SK-N-SH (cell line): ENCODE measurements at regions of chr20 and their contacts with region 1.

Region 1: DNA sequence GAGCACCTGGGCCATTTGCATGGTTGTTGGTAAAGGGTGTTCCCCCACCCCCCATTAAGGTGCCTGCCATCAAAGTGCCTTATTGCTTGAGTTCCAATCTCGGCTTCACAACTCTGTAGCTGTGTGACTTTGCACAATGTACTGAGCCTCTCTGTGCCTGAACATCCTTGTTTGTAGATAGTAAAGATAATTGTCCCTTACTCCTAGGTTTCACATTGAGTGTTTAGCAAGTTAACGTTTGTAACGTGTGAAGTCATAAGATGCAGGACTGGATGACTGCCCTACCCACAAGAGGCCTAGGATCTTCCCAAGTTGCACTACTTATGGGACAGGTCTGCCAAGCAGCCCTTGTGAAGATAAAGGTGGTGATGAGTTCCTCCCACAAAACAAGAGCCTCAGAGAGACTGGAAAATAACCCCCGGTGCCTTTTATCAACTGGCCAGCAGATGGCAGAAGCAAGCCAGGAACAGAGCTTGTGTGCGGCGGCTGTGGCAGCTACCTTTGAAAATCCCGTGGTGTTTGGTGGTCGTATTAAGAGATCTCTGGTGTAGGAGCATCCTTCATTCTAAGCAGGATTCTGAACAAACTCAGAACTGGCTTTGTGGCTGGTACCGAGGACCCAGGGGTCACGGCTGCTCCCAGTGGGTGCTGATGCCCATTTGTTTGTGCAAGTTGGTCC is 99.0 kb downstream of the CDH26 start:
- DNase-seq: peak; percentile 78
- H3K4me3 ChIP-seq: peak overlapping the region in 1 of 2 experiments; percentile 35; a peak in 1 of 4 replicates
- H3K27ac ChIP-seq: no peak overlapping the region
- H3K4me1 ChIP-seq: peaks cover 0 to 10% of the 10 kb centered on the region in 2 experiments; a peak in 2 of 4 replicates
- H3K27me3 ChIP-seq: no peaks in the 10 kb centered on the region
- CTCF ChIP-seq: peak; percentile 48
- EP300 ChIP-seq: no peak
- RAD21 ChIP-seq: peak; percentile 92

Region 2: GRCh38 chr20:59988106-59988731 is 69.0 kb before region 1 on chr20:
- CTCF ChIA-PET with region 1: no interaction called
- POLR2A ChIA-PET with region 1: no interaction called
- DNase-seq: no peak
- H3K4me3 ChIP-seq: no peak overlapping the region
- H3K27ac ChIP-seq: no peak overlapping the region
- H3K4me1 ChIP-seq: no peaks in the 10 kb centered on the region
- H3K27me3 ChIP-seq: no peaks in the 10 kb centered on the region
- CTCF ChIP-seq: no peak
- EP300 ChIP-seq: no peak
- RAD21 ChIP-seq: no peak

Region 3: DNA sequence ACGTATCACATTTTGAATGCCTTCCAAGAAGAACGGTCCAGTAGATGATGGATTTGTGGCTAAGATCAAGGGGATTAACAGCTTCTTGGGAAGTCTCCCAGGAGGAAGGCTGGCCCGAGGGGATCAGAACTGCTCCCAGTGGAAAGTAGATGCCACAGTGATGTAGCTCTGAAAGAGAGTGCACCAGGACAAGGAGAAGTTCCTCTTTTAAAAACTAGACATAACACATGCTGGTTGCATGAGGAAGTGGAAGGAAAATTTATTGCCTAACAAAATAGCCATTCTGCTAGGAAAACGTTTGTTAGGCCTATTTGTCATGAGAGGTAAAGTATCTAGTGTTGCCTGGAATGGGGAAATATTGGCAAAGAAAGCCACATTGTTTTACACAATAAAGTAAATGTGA is 11.2 kb before region 1 on chr20:
- CTCF ChIA-PET with region 1: interaction called, 28 read pairs
- POLR2A ChIA-PET with region 1: no interaction called
- DNase-seq: no peak
- H3K4me3 ChIP-seq: no peak overlapping the region
- H3K27ac ChIP-seq: no peak overlapping the region
- H3K4me1 ChIP-seq: no peaks in the 10 kb centered on the region; a peak in 1 of 4 replicates
- H3K27me3 ChIP-seq: no peaks in the 10 kb centered on the region
- CTCF ChIP-seq: no peak
- EP300 ChIP-seq: no peak
- RAD21 ChIP-seq: no peak

Region 4: GRCh38 chr20:60069656-60070055 is 12.4 kb after region 1 on chr20:
- CTCF ChIA-PET with region 1: interaction called, 17 read pairs
- POLR2A ChIA-PET with region 1: no interaction called
- DNase-seq: no peak
- H3K4me3 ChIP-seq: no peak overlapping the region
- H3K27ac ChIP-seq: no peak overlapping the region
- H3K4me1 ChIP-seq: no peaks in the 10 kb centered on the region; a peak in 2 of 4 replicates
- H3K27me3 ChIP-seq: no peaks in the 10 kb centered on the region
- CTCF ChIP-seq: no peak
- EP300 ChIP-seq: no peak
- RAD21 ChIP-seq: no peak

Region 5: DNA sequence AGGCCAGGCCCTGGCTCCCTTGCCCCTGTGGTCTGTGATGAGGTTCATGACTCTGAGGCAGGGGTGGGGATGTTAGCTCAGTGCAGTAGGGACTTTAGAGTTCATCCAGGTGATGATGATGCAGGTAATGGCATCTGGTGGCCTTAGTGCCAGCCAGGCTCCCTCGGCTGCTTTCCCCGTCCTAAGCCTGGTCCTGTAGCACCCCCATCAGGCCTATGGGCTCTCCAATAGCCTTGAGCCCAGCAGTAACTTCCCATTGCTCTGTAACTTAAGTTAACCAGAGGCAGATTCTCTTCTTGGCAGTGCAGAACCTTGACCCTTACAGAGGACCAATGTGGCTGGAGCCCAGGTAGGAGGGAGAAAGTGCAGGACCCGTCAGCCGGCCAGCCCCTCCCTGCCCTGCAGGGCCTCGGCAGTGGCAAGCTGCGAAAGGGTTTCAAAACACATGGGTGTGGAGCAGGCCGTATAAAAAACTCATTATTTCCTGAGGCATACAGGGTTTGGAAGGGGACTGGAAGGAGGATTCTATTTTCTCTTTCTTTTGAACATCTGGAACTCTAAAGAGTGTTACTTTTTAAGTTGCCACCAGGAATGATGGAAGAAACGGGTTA is 307.9 kb after region 1 on chr20:
- CTCF ChIA-PET with region 1: interaction called, 16 read pairs
- POLR2A ChIA-PET with region 1: no interaction called
- DNase-seq: peak; percentile 54
- H3K4me3 ChIP-seq: no peak overlapping the region
- H3K27ac ChIP-seq: peak overlapping the region in 1 of 2 experiments; percentile 74; a peak in 2 of 4 replicates
- H3K4me1 ChIP-seq: peaks cover 0 to 17% of the 10 kb centered on the region in 2 experiments; a peak in 2 of 4 replicates
- H3K27me3 ChIP-seq: no peaks in the 10 kb centered on the region
- CTCF ChIP-seq: no peak
- EP300 ChIP-seq: no peak
- RAD21 ChIP-seq: peak; percentile 73

Region 6: GRCh38 chr20:61234008-61234802 is 1176.9 kb after region 1 on chr20:
- CTCF ChIA-PET with region 1: interaction called, 22 read pairs
- POLR2A ChIA-PET with region 1: no interaction called
- DNase-seq: no peak
- H3K4me3 ChIP-seq: no peak overlapping the region
- H3K27ac ChIP-seq: no peak overlapping the region
- H3K4me1 ChIP-seq: no peaks in the 10 kb centered on the region
- H3K27me3 ChIP-seq: no peaks in the 10 kb centered on the region
- CTCF ChIP-seq: no peak
- EP300 ChIP-seq: no peak
- RAD21 ChIP-seq: no peak